ENCODE measurements at regions of chr3 and their contacts with region 1.

Region 1: DNA sequence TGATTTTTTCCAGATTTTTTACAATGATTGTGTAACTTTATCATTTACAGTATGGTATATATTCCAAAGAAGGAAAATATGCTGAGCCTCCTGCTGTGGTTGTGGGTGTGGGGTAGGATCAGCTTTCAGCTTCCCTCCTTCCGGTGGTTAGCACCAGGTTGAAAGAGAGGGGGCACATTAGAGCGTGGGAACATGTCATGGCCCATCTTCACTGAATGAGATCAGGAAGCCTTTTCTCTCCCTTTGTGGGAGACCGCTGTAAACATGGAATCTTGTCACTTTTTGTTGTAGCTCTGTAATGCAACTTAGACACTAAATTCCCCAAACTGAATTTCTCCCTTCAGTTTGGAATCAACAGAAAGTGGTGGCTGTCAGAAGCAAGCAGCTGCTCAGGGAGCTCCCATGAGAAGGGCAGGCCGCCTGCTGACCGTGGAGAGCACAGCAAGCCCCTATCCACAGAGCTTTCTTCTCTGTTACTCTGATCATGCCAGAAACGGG is 86.7 kb upstream of the LIMD1 start:
- DNase-seq: peak in 4 of 5 donors; percentile 39 to 71 (median 52)
- ATAC-seq: peak in 3 of 4 donors; percentile 66 to 76 (median 68)
- H3K4me3 ChIP-seq: no peak overlapping the region
- H3K27ac ChIP-seq: peak overlapping the region in 5 of 12 donors; percentile 10 to 41 (median 26)
- H3K4me1 ChIP-seq: peaks cover 0 to 15% (median 2%) of the 10 kb centered on the region in 12 donors
- H3K27me3 ChIP-seq: no peaks in the 10 kb centered on the region
- CTCF ChIP-seq: peak in 9 of 12 donors; percentile 9 to 57 (median 32)
- POLR2A ChIP-seq: no peak

Region 2: DNA sequence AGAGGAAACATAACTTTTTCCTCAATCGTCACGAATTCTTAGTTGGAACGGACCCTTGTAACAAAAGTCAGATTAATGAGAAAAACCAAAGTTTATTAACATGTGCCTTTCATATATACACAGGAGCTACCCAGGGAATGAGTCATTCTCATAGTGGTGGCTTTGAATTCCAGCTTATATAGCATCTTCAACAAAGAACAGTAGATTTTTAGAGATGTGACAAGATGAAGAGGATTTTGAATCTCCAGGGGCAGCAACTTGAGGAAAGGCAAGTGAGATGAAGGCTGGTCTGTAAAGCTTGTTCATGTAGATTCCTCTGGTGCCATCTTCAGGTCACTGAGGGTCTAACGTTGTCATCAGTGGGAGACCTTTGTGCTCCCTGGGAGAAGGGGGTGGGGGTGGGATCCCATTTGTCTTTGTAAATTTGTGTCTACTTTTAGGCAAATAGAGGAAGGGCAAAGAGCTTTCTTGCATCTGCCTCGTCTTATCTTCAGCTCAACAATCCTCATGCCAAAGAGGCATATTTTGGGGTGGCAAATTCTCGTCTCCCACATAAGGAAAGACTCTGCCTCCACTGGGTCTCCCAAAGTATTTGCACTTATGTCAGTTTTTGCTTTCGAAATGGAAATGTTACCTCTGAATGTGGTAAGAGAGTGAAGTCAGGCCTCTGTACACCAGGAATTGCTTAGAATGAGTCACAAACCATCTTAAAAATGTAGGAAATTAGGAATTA is 452.3 kb before region 1 on chr3:
- intact Hi-C with region 1: loop called in 1 of 10 experiments (anchors 5 kb)
- DNase-seq: no peak
- ATAC-seq: no peak
- H3K4me3 ChIP-seq: no peak overlapping the region
- H3K27ac ChIP-seq: peak overlapping the region in 4 of 12 donors; percentile 4 to 86 (median 78)
- H3K4me1 ChIP-seq: peaks cover 0 to 64% (median 9%) of the 10 kb centered on the region in 12 donors
- H3K27me3 ChIP-seq: no peaks in the 10 kb centered on the region
- CTCF ChIP-seq: peak in 7 of 12 donors; percentile 10 to 33 (median 22)
- POLR2A ChIP-seq: no peak

Region 3: GRCh38 chr3:45210308-45211041 is 297.4 kb before region 1 on chr3:
- intact Hi-C with region 1: loop called in 1 of 10 experiments (anchors 5 kb)
- DNase-seq: peak; percentile 77 to 91 (median 87)
- ATAC-seq: peak; percentile 81 to 98 (median 96)
- H3K4me3 ChIP-seq: no peak overlapping the region
- H3K27ac ChIP-seq: peak overlapping the region in 1 of 12 donors; percentile 69
- H3K4me1 ChIP-seq: peaks cover 0 to 9% (median 0%) of the 10 kb centered on the region in 12 donors
- H3K27me3 ChIP-seq: peaks cover 0 to 2% (median 0%) of the 10 kb centered on the region in 9 donors
- CTCF ChIP-seq: peak; percentile 48 to 77 (median 67)
- POLR2A ChIP-seq: no peak

Region 4: GRCh38 chr3:45224824-45225464 is 282.9 kb before region 1 on chr3:
- intact Hi-C with region 1: loop called in 2 of 10 experiments (anchors 10 kb)
- DNase-seq: peak; percentile 55 to 87 (median 74)
- ATAC-seq: peak; percentile 63 to 88 (median 82)
- H3K4me3 ChIP-seq: peak overlapping the region in 11 of 12 donors; percentile 13 to 71 (median 50)
- H3K27ac ChIP-seq: no peak overlapping the region
- H3K4me1 ChIP-seq: peaks cover 0 to 16% (median 5%) of the 10 kb centered on the region in 12 donors
- H3K27me3 ChIP-seq: peaks cover 0 to 69% (median 18%) of the 10 kb centered on the region in 9 donors
- CTCF ChIP-seq: peak; percentile 20 to 62 (median 44)
- POLR2A ChIP-seq: no peak

Region 5: GRCh38 chr3:45553996-45554666 is 46.3 kb after region 1 on chr3:
- intact Hi-C with region 1: loop called in 1 of 10 experiments (anchors 5 kb)
- DNase-seq: peak in 4 of 5 donors; percentile 61 to 87 (median 64)
- ATAC-seq: peak in 3 of 4 donors; percentile 2 to 47 (median 5)
- H3K4me3 ChIP-seq: no peak overlapping the region
- H3K27ac ChIP-seq: peak overlapping the region; percentile 50 to 89 (median 76)
- H3K4me1 ChIP-seq: peaks cover 13 to 67% (median 56%) of the 10 kb centered on the region in 12 donors
- H3K27me3 ChIP-seq: no peaks in the 10 kb centered on the region
- CTCF ChIP-seq: no peak
- POLR2A ChIP-seq: no peak

Region 6: DNA sequence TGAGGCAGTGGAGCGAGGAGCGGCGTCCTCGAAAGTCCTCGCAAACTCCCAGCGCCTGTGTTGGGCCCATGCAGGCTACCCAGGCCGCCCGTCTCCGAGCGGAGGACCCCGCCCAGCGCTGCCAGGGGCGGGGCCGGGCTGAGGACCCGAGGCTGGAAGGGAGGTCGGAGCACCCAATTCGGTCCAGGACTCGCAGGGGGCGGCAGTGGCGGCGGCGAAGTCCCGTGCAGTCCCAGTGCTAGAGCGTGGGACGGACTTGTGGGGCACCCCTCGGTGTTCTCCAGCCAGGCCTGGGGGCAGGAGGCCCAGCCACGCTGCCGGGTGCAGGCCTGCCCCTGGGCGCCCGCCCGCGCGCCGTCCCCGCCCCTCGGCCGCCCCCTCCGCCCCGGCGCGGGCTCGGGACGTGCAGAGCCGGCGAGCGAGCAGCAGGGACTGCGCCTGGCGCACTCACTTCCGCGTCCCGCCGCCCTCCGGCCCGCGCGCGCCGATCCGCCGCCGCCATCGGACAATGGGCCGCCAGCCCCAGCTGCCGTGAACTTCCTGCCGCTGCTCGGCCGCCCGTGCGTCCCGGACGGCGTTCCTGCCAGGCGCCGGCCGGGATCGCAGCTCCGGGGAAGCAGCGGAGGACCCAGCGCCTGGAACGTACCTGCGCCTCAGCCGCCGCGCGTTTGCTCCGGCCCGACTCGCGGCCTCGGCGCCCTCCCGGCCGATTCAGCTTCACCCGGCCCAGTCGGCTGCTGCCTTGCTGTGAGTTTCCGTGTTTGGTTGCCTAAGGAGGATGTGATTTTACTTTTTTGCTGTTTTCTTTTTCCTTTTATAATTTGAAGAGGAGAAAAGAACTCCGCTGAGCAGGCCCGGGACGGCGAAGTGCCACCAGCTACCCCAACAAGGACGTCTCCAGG is 86.1 kb after region 1 on chr3:
- intact Hi-C with region 1: loop called in 7 of 10 experiments (anchors 1 to 10 kb)
- DNase-seq: peak; percentile 76 to 89 (median 83)
- ATAC-seq: peak; percentile 19 to 90 (median 74)
- H3K4me3 ChIP-seq: peak overlapping the region; percentile 56 to 97 (median 87)
- H3K27ac ChIP-seq: peak overlapping the region; percentile 89 to 97 (median 94)
- H3K4me1 ChIP-seq: peaks cover 0 to 57% (median 48%) of the 10 kb centered on the region in 12 donors
- H3K27me3 ChIP-seq: no peaks in the 10 kb centered on the region
- CTCF ChIP-seq: peak in 1 of 12 donors; percentile 12
- POLR2A ChIP-seq: peak in 1 of 2 donors; percentile 57

Region 7: GRCh38 chr3:45656575-45657363 is 148.9 kb after region 1 on chr3:
- intact Hi-C with region 1: loop called (anchors 1 to 2 kb)
- DNase-seq: peak; percentile 84 to 94 (median 93)
- ATAC-seq: peak; percentile 75 to 92 (median 88)
- H3K4me3 ChIP-seq: no peak overlapping the region
- H3K27ac ChIP-seq: peak overlapping the region in 2 of 12 donors; percentile 14 to 16
- H3K4me1 ChIP-seq: peaks cover 0 to 58% (median 41%) of the 10 kb centered on the region in 12 donors
- H3K27me3 ChIP-seq: no peaks in the 10 kb centered on the region
- CTCF ChIP-seq: peak; percentile 89 to 97 (median 93)
- POLR2A ChIP-seq: no peak